A673 (cell line): ENCODE measurements at regions of chrX and their contacts with region 1.

Region 1: GRCh38 chrX:318739-319578 is at the start of gene GTPBP6:
- DNase-seq: peak; percentile 99
- H3K4me3 ChIP-seq: peak within 1 kb of the TSS; percentile 98
- H3K27ac ChIP-seq: peak within 1 kb of the TSS; percentile 99
- H3K4me1 ChIP-seq: no peaks in the 10 kb centered on the region
- H3K27me3 ChIP-seq: no peaks in the 10 kb centered on the region
- CTCF ChIP-seq: peak; percentile 37; the same call in 1 of the 2 replicates
- total RNA-seq, gene GTPBP6: 82.3 and 85.1 TPM in 2 replicates

Region 2: GRCh38 chrX:283115-283845 is 35.7 kb before region 1 on chrX:
- CTCF ChIA-PET with region 1: no interaction called
- POLR2A ChIA-PET with region 1: no interaction called
- intact Hi-C with region 1: loop called (anchors 1 kb)
- DNase-seq: peak; percentile 97
- H3K4me3 ChIP-seq: peak overlapping the region; percentile 48
- H3K27ac ChIP-seq: peak overlapping the region; percentile 85
- H3K4me1 ChIP-seq: peaks cover 9% of the 10 kb centered on the region
- H3K27me3 ChIP-seq: no peaks in the 10 kb centered on the region
- CTCF ChIP-seq: no peak